HepG2 (cell line): ENCODE measurements at regions of chr20 and their contacts with region 1.

Region 1: DNA sequence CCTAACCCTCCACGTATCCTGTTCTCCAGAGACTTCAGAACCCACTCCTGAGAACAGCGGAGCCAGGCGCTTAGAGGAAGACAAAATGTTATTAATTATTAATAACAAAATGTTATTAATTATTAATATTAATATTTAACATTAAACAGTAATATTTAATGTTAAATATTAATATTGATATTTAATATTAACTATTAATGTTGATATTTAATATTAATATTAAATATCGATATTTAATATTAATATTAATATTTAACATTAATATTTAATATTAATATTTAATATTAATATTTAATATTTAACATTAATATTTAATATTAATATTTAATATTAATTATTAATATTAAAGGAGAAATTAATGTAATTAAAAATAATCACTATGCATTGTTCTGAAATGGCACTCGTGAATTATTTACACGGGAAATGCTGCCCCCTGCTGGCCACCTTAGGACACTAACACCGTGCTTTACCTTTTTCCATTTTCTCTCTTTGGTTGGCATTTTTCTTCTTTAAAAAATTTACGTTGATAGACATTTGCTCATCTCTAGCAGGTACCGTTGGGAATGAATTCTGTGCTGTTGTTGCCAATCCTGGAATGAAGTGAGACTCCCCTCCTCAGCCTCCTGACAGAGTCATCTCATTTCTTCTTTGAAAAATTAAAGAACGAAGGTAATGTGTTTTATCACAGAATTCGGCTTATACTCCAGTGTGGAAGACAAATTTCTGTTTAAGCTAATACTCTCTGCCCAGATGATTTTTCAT is 7.5 kb upstream of the GGTLC1 start:
- DNase-seq: peak; percentile 50
- ATAC-seq: peak; percentile 49; the same call in 2 of the 3 replicates
- H3K4me3 ChIP-seq: no peak overlapping the region
- H3K27ac ChIP-seq: no peak overlapping the region
- H3K4me1 ChIP-seq: no peaks in the 10 kb centered on the region
- H3K27me3 ChIP-seq: no peaks in the 10 kb centered on the region
- CTCF ChIP-seq: peak; percentile 64
- EP300 ChIP-seq: no peak
- POLR2A ChIP-seq: no peak
- RAD21 ChIP-seq: peak; percentile 45; the same call in 1 of the 2 replicates

Region 2: GRCh38 chr20:23794841-23795240 is 201.2 kb before region 1 on chr20:
- CTCF ChIA-PET with region 1: no interaction called
- POLR2A ChIA-PET with region 1: no interaction called
- in situ Hi-C with region 1: loop called (anchors 10 kb)
- intact Hi-C with region 1: no loop called
- DNase-seq: no peak
- ATAC-seq: no peak
- H3K4me3 ChIP-seq: no peak overlapping the region
- H3K27ac ChIP-seq: no peak overlapping the region
- H3K4me1 ChIP-seq: no peaks in the 10 kb centered on the region
- H3K27me3 ChIP-seq: no peaks in the 10 kb centered on the region; a peak in 1 of 5 replicates
- CTCF ChIP-seq: no peak
- EP300 ChIP-seq: no peak
- POLR2A ChIP-seq: no peak
- RAD21 ChIP-seq: no peak

Region 3: GRCh38 chr20:23889775-23890211 is 106.3 kb before region 1 on chr20:
- CTCF ChIA-PET with region 1: interaction called, 26 read pairs
- POLR2A ChIA-PET with region 1: no interaction called
- in situ Hi-C with region 1: loop called (anchors 5 kb)
- intact Hi-C with region 1: loop called (anchors 1 kb)
- DNase-seq: peak; percentile 74
- ATAC-seq: peak; percentile 99
- H3K4me3 ChIP-seq: no peak overlapping the region
- H3K27ac ChIP-seq: no peak overlapping the region
- H3K4me1 ChIP-seq: no peaks in the 10 kb centered on the region
- H3K27me3 ChIP-seq: peaks cover 0 to 3% of the 10 kb centered on the region in 2 experiments; a peak in 1 of 5 replicates
- CTCF ChIP-seq: peak; percentile 98
- EP300 ChIP-seq: no peak
- POLR2A ChIP-seq: no peak
- RAD21 ChIP-seq: peak; percentile 94

Region 4: GRCh38 chr20:23932256-23932655 is 63.8 kb before region 1 on chr20:
- CTCF ChIA-PET with region 1: interaction called, 46 read pairs
- POLR2A ChIA-PET with region 1: no interaction called
- in situ Hi-C with region 1: loop called (anchors 5 kb)
- intact Hi-C with region 1: loop called (anchors 1 kb)
- DNase-seq: no peak
- ATAC-seq: no peak
- H3K4me3 ChIP-seq: no peak overlapping the region
- H3K27ac ChIP-seq: no peak overlapping the region
- H3K4me1 ChIP-seq: no peaks in the 10 kb centered on the region
- H3K27me3 ChIP-seq: no peaks in the 10 kb centered on the region; a peak in 2 of 5 replicates
- CTCF ChIP-seq: no peak
- EP300 ChIP-seq: no peak
- POLR2A ChIP-seq: no peak
- RAD21 ChIP-seq: no peak

Region 5: DNA sequence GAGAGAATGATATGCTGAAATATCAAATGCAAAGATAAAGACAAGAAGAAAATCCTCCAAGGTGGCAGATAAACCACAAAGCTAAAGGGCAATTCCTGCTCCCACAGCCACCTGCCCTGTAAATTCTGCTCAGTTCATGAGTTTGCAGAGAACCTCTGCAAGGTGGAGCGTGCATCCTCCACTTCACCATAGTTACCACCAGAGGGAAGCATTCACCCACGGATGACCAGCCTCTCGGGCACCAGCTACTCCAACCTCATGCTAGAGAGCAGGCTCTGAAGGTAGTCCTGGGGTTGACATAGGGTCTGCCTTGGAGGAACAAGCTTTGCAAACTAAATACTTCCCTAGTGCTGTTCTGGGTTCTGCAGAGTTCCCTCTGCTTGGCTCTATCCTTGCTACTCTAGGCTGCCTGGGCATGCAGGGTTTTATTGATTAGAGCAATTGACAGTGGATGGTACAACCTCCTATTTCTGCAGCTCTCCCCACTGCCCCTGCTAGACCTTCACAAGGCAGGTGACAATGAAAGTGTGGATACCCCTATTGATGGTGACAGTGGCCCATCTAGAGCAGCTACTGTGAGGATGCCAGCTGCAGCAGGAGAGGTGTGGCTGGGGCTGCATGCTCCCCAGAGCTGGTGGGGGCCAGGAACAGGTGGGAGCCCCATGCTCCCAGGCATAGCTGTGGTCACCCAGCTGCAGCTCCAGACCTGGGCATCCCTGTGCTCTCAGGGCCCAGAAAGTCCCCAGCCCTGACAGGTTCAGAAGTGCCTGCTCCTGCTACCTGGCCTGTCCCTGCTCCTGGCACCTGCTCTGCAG is 58.6 kb before region 1 on chr20:
- CTCF ChIA-PET with region 1: interaction called, 46 read pairs
- POLR2A ChIA-PET with region 1: no interaction called
- in situ Hi-C with region 1: loop called (anchors 5 kb)
- intact Hi-C with region 1: loop called (anchors 1 kb)
- DNase-seq: peak; percentile 52
- ATAC-seq: peak; percentile 100
- H3K4me3 ChIP-seq: no peak overlapping the region
- H3K27ac ChIP-seq: no peak overlapping the region
- H3K4me1 ChIP-seq: no peaks in the 10 kb centered on the region
- H3K27me3 ChIP-seq: no peaks in the 10 kb centered on the region
- CTCF ChIP-seq: peak; percentile 95
- EP300 ChIP-seq: no peak
- POLR2A ChIP-seq: no peak
- RAD21 ChIP-seq: peak; percentile 95